ENCODE measurements at regions of chr10 and their contacts with region 1.

Region 1: DNA sequence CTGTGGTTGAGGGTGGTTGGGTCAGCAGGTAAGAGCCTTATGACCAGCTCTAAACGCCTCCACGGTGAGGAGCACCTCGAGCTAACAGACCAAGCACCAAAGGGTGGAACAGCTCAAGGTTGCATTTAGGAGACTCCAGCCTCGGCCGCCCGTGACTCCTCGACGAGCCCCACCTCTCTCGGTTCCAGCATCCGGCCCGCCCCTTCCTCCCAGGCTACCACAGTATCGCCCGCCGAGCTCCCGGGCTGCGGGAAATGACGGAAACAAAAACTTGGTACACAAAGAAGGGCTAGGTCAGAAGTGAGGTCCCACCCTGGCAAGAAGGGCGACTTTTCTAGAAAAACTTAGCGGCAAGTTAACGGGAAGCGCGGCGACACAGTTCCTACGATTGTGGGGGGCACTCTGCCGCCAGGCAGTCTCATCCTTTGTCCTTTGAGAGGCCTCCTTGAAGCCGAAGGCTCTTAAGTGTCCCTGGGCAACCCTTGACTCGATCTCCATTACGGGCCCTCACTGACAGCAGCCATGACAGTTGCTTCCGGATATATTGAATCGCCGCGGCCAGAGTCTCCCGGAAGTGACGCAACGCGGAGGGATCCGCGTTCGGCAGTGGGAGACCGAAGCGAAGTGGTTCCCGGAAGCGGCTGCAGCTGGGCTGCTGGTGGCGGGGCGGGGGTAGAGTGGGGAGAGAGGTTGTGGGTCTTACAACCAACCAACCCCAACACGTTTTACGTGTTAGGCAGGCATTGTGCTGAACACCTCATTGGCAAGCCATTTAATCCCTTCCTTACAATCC is 40.2 kb upstream of the ZNF518A start:
- DNase-seq: peak; percentile 89
- H3K4me3 Mint-ChIP-seq: peak overlapping the region; percentile 91
- H3K27ac Mint-ChIP-seq: peak overlapping the region; percentile 98
- H3K4me1 Mint-ChIP-seq: peaks cover 9% of the 10 kb centered on the region
- H3K27me3 Mint-ChIP-seq: peaks cover 15% of the 10 kb centered on the region

Region 2: GRCh38 chr10:96043033-96043932 is 46.6 kb before region 1 on chr10 and contains the start of gene CCNJ:
- intact Hi-C with region 1: loop called (anchors 1 kb)
- DNase-seq: peak; percentile 76
- H3K4me3 Mint-ChIP-seq: peak within 1 kb of the TSS; percentile 92
- H3K27ac Mint-ChIP-seq: peak within 1 kb of the TSS; percentile 73
- H3K4me1 Mint-ChIP-seq: peaks cover 34% of the 10 kb centered on the region
- H3K27me3 Mint-ChIP-seq: peaks cover 4% of the 10 kb centered on the region
- total RNA-seq, gene CCNJ: 8.3 and 9.3 TPM in 2 replicates

Region 3: GRCh38 chr10:96073722-96074121 is 16.1 kb before region 1 on chr10:
- intact Hi-C with region 1: loop called (anchors 1 kb)
- DNase-seq: peak; percentile 18
- H3K4me3 Mint-ChIP-seq: no peak overlapping the region
- H3K27ac Mint-ChIP-seq: peak overlapping the region; percentile 20
- H3K4me1 Mint-ChIP-seq: peaks cover 32% of the 10 kb centered on the region
- H3K27me3 Mint-ChIP-seq: no peaks in the 10 kb centered on the region

Region 4: DNA sequence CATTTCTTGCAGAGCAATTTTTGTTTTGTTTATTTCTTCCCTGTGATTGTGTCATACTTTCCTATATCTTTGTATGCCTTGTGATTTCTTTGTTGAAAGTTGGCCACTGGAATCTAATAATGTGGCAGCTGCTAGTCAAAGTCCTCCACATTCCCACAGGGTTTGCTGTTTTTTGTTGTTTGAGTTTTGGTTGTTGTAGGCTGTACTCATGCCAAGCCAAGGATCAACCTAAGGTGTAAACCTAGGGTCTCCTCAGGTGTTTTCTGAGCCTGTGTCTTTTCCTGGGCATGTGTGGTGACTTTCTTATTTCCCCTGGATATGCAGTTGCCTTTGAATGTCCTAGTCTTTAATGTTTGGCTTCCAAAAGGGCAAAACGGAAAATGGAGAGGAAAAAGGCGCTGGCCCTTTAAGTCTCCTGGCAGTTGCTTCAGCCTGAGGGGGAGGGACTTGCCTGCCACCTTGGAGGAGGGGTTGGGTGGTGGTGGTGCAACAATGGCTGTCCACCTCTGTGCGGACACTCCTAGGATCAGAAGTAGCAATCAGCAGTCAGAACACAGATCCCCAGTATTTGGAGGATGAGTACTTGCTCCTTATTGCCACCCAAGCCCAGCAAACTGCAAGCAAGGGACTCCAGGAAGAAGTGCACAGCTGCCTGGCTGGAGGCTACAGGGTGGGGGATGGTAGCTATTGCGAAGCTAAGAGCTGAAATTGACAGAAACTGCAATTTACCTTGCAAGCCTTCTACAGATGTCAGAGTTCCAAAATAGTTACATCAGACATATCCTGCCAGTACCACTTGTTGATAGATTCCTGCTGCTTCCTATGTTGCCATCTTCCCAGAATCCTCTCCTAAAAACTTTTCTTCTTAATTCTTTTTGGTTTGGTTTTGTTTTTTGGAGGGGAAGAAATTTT is 34.6 kb after region 1 on chr10:
- intact Hi-C with region 1: no loop called
- DNase-seq: no peak
- H3K4me3 Mint-ChIP-seq: no peak overlapping the region
- H3K27ac Mint-ChIP-seq: no peak overlapping the region
- H3K4me1 Mint-ChIP-seq: peaks cover 24% of the 10 kb centered on the region
- H3K27me3 Mint-ChIP-seq: peaks cover 43% of the 10 kb centered on the region

Measured in activated T-helper 2 cell treated with anti-CD3 and anti-CD28 coated beads, Interferon-gamma antibody, Interleukin-2, Interleukin-4, amounts not matched to agents 10 μg/mL and 5 μg/mL and 100 μg/mL, durations not matched to agents 14 hours and 24 hours and 36 hours (primary cell).